ENCODE measurements at regions of chr17 and their contacts with region 1.

Region 1: DNA sequence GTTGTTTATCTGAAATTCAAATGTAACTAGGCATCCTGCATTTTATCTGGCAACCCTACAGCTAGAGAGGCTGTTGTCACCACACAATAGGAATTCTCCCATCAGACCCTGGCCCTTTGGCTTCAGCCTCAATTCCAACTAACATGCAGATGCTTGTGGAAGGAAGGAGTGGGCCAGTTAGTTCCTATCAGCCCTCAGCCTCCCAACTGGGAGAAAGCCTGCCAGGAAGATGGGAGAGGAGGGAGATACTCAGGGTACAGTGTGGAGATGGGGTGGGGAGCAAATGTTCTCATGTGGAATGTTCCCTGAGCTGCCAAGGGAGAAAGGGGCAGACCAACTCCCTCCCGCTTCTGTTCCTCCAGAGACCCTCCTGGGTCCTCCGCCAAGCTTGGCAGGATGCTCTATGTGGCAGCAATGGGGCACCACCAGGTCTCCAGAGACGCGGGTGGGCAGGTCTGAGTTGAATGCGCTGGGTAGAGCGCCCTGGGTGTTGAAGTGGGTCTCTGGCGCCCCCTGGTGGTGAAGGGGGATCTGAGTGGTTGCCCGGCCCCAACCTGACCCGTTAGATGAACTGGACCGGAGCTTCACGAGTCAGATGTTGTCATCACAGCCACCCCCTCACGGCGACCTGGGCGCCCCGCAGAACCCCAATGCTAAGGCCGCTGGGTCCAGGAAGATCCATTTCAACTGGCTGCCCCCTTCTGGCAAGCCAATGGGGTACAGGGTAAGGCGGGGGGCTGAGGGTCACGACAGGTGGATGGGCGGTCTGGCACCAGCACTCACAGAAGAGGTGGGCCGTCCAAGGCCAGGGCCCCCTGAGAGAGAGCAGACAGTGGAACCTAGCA is 15.2 kb downstream of the GALK1 start:
- DNase-seq: peak; percentile 86
- CTCF ChIP-seq: peak; percentile 89

Region 2: GRCh38 chr17:75589012-75589918 is 160.5 kb before region 1 on chr17:
- CTCF ChIA-PET with region 1: interaction called, 16 read pairs
- POLR2A ChIA-PET with region 1: no interaction called
- DNase-seq: peak; percentile 100
- CTCF ChIP-seq: peak; percentile 81

Region 3: GRCh38 chr17:75619506-75620431 is 130.0 kb before region 1 on chr17:
- CTCF ChIA-PET with region 1: interaction called, 856 read pairs
- POLR2A ChIA-PET with region 1: interaction called, 4 read pairs
- DNase-seq: peak; percentile 59
- CTCF ChIP-seq: peak; percentile 28

Region 4: GRCh38 chr17:75667021-75667790 is 82.6 kb before region 1 on chr17 and contains the starts of genes RECQL5 and SAP30BP:
- CTCF ChIA-PET with region 1: interaction called, 424 read pairs
- POLR2A ChIA-PET with region 1: interaction called, 3 read pairs
- DNase-seq: peak; percentile 94
- CTCF ChIP-seq: no peak

Region 5: DNA sequence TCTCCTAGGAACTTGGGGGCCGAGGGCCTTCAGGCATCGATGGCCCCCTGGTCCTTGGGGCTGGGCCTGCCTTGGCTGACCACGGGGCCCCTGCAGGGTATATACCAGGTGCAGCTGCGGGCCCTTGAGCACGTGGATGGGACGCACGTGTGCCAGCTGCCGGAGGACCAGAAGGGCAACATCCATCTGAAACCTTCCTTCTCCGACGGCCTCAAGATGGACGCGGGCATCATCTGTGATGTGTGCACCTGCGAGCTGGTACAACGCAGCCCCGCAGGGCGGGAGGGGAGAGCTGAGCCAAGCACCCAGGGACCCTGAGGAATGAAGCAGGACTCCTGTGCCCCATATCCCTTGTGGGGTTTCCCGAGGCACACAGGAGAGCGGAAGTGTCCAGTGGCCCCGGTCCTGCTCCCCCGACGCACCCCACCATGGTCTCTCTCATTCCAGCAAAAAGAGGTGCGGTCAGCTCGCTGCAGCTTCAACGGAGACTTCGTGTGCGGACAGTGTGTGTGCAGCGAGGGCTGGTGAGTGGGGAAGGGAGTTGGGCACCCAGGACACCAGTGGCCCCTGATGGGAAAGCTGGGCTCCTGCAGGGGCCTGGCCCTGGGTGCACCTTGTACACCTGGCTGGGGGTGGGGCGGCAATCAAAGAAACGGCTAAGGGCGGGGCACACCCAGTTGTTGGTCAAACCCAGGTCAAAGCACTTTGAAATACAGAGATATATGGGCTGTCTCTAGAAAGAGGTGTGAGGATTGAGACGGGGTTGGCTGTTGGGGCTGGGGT is 17.9 kb before region 1 on chr17:
- CTCF ChIA-PET with region 1: interaction called, 75 read pairs
- POLR2A ChIA-PET with region 1: no interaction called
- DNase-seq: no peak
- CTCF ChIP-seq: no peak

Region 6: GRCh38 chr17:75827252-75828115 is 77.7 kb after region 1 on chr17:
- CTCF ChIA-PET with region 1: interaction called, 21 read pairs
- POLR2A ChIA-PET with region 1: no interaction called
- DNase-seq: peak; percentile 89
- CTCF ChIP-seq: peak; percentile 72